ENCODE measurements at regions of chr10 and their contacts with region 1.

Region 1: DNA sequence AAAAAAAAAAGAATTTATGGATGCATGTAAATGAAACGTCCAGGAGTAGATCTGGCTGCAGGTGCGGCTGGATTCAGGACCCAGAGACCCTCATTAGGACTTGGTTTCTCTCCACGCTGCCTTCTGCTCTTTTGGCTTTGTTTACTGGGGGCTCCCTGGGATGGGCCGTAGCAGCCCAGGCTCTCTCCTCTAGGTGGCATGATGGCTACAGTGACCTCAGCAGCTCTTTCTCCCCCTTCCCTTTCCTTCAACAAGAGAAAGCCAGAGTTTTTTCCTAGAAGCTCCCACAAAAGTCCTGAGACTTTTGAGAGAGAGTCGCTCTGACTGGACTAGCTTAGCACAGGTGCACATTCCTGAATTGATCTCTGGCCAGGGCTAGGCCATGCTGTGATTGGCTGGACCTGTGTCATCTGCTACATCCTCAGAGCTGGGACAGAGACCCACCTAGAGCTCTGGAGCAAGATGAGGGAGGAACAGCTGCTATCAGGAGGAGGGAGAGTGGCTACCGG is 67.8 kb upstream of the PDCD4 start:
- DNase-seq: peak; percentile 31
- H3K4me3 Mint-ChIP-seq: no peak overlapping the region
- H3K27ac Mint-ChIP-seq: peak overlapping the region; percentile 20
- H3K4me1 Mint-ChIP-seq: peaks cover 35% of the 10 kb centered on the region
- H3K27me3 Mint-ChIP-seq: peaks cover 3% of the 10 kb centered on the region

Region 2: DNA sequence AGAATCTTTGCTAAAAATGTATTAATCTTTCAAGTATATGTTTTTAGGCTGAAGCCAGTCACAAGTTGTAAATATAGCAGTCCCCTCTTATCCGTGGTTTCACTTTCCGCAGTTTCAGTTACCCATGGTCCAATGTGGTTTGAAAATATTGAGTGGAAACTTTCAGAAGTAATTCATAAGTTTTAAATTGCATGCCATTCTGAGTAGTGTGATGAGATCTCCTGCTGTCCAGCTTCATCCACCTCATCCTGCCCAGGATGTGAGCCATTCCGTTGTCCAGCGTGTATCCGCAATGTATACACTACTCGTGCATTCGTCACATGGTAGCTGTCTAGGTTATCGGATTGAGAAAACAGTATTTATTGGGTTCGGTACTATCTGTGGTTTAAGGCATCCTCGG is 80.0 kb after region 1 on chr10:
- CTCF ChIA-PET with region 1: interaction called, 14 read pairs
- POLR2A ChIA-PET with region 1: no interaction called
- DNase-seq: no peak
- H3K4me3 Mint-ChIP-seq: peak overlapping the region; percentile 60
- H3K27ac Mint-ChIP-seq: peak overlapping the region; percentile 40
- H3K4me1 Mint-ChIP-seq: peaks cover 41% of the 10 kb centered on the region
- H3K27me3 Mint-ChIP-seq: no peaks in the 10 kb centered on the region

Region 3: DNA sequence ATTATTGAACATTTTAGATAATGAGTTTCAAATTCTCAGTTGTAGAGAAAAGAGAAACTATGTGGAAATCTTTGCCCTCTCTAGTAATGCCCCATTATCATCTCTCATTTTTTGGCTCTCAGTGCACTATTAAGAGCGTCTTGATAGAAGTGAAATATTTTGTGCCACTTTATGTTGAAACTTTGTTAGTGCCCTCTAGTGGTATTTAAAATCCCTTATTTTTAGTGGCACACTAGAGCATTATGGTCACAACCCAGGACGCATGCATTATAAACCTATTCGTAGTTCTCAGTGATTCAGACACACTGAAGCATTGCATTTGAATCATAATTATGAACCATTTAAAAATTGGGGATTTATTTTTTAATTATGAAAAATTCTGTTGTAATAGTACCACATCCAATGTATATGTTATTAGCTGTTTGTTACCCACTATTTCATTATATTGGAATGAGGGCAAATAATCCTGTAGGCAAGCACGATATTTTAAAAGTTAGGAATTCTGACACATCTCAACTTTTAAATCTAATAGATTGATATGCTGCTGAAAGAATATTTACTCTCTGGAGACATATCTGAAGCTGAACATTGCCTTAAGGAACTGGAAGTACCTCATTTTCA is 89.8 kb after region 1 on chr10:
- CTCF ChIA-PET with region 1: interaction called, 19 read pairs
- POLR2A ChIA-PET with region 1: interaction called, 5 read pairs
- DNase-seq: no peak
- H3K4me3 Mint-ChIP-seq: no peak overlapping the region
- H3K27ac Mint-ChIP-seq: no peak overlapping the region
- H3K4me1 Mint-ChIP-seq: peaks cover 5% of the 10 kb centered on the region
- H3K27me3 Mint-ChIP-seq: no peaks in the 10 kb centered on the region

Measured in activated CD4-positive, alpha-beta memory T cell treated with anti-CD3 and anti-CD28 coated beads, Interleukin-2, amount 10 ng/mL, durations not matched to agents 7 days and 5 days (primary cell).